WTC11 (cell line): ENCODE measurements at regions of chr7 and their contacts with region 1.

Region 1: GRCh38 chr7:149125863-149126661 is at the start of gene ZNF425:
- DNase-seq: peak; percentile 94
- ATAC-seq: peak; percentile 87
- H3K4me3 Mint-ChIP-seq: peak within 1 kb of the TSS; percentile 100
- H3K27ac Mint-ChIP-seq: peak within 1 kb of the TSS; percentile 100
- H3K4me1 Mint-ChIP-seq: peaks cover 23% of the 10 kb centered on the region
- H3K27me3 Mint-ChIP-seq: peaks cover 5% of the 10 kb centered on the region; the same call in 1 of the 2 replicates
- CTCF ChIP-seq: peak; percentile 89
- total RNA-seq, gene ZNF425: 3.8 to 5.8 TPM (median 4.9 TPM) in 3 replicates

Region 2: GRCh38 chr7:149147072-149147751 is 21.1 kb after region 1 on chr7 and contains the start of gene ZNF398:
- CTCF ChIA-PET with region 1: interaction called, 40 read pairs
- POLR2A ChIA-PET with region 1: interaction called, 35 read pairs
- DNase-seq: peak; percentile 65
- ATAC-seq: peak; percentile 34
- H3K4me3 Mint-ChIP-seq: peak within 1 kb of the TSS; percentile 91
- H3K27ac Mint-ChIP-seq: peak within 1 kb of the TSS; percentile 99
- H3K4me1 Mint-ChIP-seq: peaks cover 62% of the 10 kb centered on the region
- H3K27me3 Mint-ChIP-seq: no peaks in the 10 kb centered on the region
- CTCF ChIP-seq: peak; percentile 88
- total RNA-seq, gene ZNF398: 57.8 to 63.2 TPM (median 58.9 TPM) in 3 replicates